ENCODE measurements at regions of chr9 and their contacts with region 1.

Region 1: GRCh38 chr9:83920927-83921707 is at the start of gene KIF27:
- DNase-seq: peak; percentile 99
- H3K4me3 Mint-ChIP-seq: peak within 1 kb of the TSS; percentile 80
- H3K27ac Mint-ChIP-seq: peak within 1 kb of the TSS; percentile 91
- H3K4me1 Mint-ChIP-seq: peaks cover 10% of the 10 kb centered on the region
- H3K27me3 Mint-ChIP-seq: no peaks in the 10 kb centered on the region
- total RNA-seq, gene KIF27: 2.6 to 3.0 TPM

Region 2: DNA sequence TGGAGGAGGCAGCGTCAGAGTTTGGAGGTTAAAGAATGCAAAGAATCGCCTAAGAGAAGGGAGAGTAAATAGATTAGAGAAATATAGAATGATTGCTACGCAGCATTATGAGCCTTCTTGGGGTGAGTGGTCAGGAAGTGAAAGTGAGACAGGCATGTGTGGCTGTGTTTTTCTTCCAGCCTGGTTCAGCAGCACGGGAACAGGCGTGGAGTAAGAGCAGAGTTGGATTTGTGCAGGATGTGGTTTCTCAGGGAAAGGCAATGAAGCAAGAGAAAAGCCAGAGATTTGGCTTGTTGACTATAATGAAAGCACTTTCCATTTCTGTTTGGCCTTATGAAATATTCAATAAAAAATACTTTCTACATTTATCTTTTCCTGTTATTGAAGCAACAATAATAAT is 348.6 kb before region 1 on chr9:
- CTCF ChIA-PET with region 1: no interaction called
- POLR2A ChIA-PET with region 1: no interaction called
- intact Hi-C with region 1: no loop called
- DNase-seq: no peak
- H3K4me3 Mint-ChIP-seq: no peak overlapping the region
- H3K27ac Mint-ChIP-seq: no peak overlapping the region
- H3K4me1 Mint-ChIP-seq: no peaks in the 10 kb centered on the region
- H3K27me3 Mint-ChIP-seq: no peaks in the 10 kb centered on the region

Region 3: GRCh38 chr9:83707768-83708514 is 213.2 kb before region 1 on chr9 and contains the start of gene UBQLN1:
- CTCF ChIA-PET with region 1: no interaction called
- POLR2A ChIA-PET with region 1: interaction called, 13 read pairs
- intact Hi-C with region 1: loop called (anchors 1 kb)
- DNase-seq: peak; percentile 94
- H3K4me3 Mint-ChIP-seq: peak within 1 kb of the TSS; percentile 87
- H3K27ac Mint-ChIP-seq: peak within 1 kb of the TSS; percentile 99
- H3K4me1 Mint-ChIP-seq: peaks cover 45% of the 10 kb centered on the region
- H3K27me3 Mint-ChIP-seq: no peaks in the 10 kb centered on the region
- total RNA-seq, gene UBQLN1: 88.8 to 101 TPM

Region 4: GRCh38 chr9:83956434-83957247 is 35.5 kb after region 1 on chr9:
- CTCF ChIA-PET with region 1: interaction called, 4 read pairs
- POLR2A ChIA-PET with region 1: no interaction called
- intact Hi-C with region 1: loop called (anchors 1 kb)
- DNase-seq: peak; percentile 78
- H3K4me3 Mint-ChIP-seq: peak overlapping the region; percentile 96
- H3K27ac Mint-ChIP-seq: peak overlapping the region; percentile 92
- H3K4me1 Mint-ChIP-seq: peaks cover 18% of the 10 kb centered on the region
- H3K27me3 Mint-ChIP-seq: no peaks in the 10 kb centered on the region

Region 5: GRCh38 chr9:84315278-84315877 is 394.3 kb after region 1 on chr9:
- CTCF ChIA-PET with region 1: no interaction called
- POLR2A ChIA-PET with region 1: no interaction called
- intact Hi-C with region 1: loop called (anchors 1 kb)
- DNase-seq: peak; percentile 70
- H3K4me3 Mint-ChIP-seq: no peak overlapping the region
- H3K27ac Mint-ChIP-seq: no peak overlapping the region
- H3K4me1 Mint-ChIP-seq: peaks cover 6% of the 10 kb centered on the region
- H3K27me3 Mint-ChIP-seq: no peaks in the 10 kb centered on the region

Region 6: GRCh38 chr9:84701801-84702200 is 780.7 kb after region 1 on chr9:
- CTCF ChIA-PET with region 1: no interaction called
- POLR2A ChIA-PET with region 1: no interaction called
- intact Hi-C with region 1: no loop called
- DNase-seq: no peak
- H3K4me3 Mint-ChIP-seq: no peak overlapping the region
- H3K27ac Mint-ChIP-seq: no peak overlapping the region
- H3K4me1 Mint-ChIP-seq: peaks cover 4% of the 10 kb centered on the region
- H3K27me3 Mint-ChIP-seq: peaks cover 3% of the 10 kb centered on the region